Left ventricle myocardium inferior (tissue), 1 donor: ENCODE measurements at regions of chr21 and their contacts with region 1.

Region 1: DNA sequence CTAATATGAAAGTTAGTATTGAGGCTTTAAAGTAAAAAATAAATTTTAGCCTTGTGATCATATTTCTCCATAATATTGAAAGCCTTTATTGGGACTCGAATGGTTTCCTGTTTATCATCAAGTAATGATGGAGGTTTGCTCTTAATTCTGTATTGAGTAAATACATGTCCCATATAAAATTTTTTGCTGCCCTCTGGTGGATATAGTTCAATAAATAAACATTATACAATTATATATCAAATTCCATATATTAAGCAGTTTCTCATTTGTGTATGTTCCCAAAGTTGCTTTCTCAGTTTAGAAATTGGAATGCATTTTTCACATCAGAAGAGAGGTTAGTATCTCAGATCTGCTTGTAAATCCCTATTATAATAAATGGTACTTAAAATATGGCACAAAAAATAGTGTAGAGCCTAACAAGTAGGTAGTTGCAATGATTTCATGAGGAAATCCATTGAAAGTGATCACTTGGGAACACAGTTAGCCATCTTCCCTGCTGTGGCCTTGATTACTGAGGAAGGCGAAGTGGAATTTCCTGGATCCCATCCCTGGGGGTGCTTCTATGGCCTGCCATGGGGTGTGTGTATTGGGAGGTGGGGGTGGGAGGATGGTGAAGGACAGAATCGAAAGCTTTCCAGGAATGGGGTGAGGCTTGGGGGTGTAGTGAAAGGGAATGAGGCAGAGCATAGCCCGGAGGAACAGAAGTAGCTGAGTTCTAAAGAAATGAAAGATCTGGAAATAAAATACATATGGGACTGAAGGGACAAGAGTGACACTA is 84.1 kb upstream of the C21orf91 start:
- DNase-seq: no peak
- H3K4me3 ChIP-seq: no peak overlapping the region
- H3K27ac ChIP-seq: no peak overlapping the region
- H3K4me1 ChIP-seq: peaks cover 31% of the 10 kb centered on the region
- H3K27me3 ChIP-seq: no peaks in the 10 kb centered on the region
- CTCF ChIP-seq: peak; percentile 42

Region 2: DNA sequence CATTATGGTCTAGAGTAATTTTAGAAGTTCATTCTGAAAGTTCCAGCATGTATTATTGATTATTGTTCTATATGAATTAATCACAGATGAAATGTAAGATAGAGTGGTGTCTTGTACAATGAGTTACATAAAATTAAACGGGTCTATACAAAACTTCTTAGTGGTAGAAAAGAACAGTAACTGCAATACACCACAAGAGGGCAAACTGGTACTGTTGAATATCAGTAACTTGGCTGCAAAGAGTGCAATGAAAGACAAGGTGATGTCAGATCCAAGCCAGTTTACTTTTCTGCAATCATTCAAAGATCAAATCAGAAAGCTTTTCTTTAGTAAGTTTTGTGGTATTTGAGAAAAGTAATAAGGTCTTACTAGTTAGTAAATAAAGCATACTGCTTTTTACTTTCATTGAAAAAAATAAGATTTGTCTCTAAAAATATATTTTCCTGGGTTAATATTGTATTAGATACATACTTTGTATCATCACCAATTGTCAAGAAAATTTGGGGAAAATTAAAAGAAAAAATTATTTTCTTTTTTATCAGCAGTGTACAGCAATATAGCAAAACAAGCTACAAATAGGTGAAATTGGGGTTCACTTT is 224.1 kb before region 1 on chr21:
- intact Hi-C with region 1: loop called (anchors 2 kb)
- DNase-seq: no peak
- H3K4me3 ChIP-seq: no peak overlapping the region
- H3K27ac ChIP-seq: no peak overlapping the region
- H3K4me1 ChIP-seq: no peaks in the 10 kb centered on the region
- H3K27me3 ChIP-seq: no peaks in the 10 kb centered on the region
- CTCF ChIP-seq: peak; percentile 91